AG04450 (cell line): ENCODE measurements at regions of chr17 and their contacts with region 1.

Region 1: GRCh38 chr17:47686276-47686635 is 7.7 kb upstream of the TBKBP1 start:
- DNase-seq: no peak
- H3K4me3 ChIP-seq: no peak overlapping the region
- H3K27ac ChIP-seq: peak overlapping the region; percentile 39
- H3K27me3 ChIP-seq: no peaks in the 10 kb centered on the region
- CTCF ChIP-seq: no peak

Region 2: GRCh38 chr17:47649153-47649971 is 36.9 kb before region 1 on chr17 and contains the start of gene KPNB1:
- CTCF ChIA-PET with region 1: no interaction called
- POLR2A ChIA-PET with region 1: interaction called, 11 read pairs
- DNase-seq: peak; percentile 100
- H3K4me3 ChIP-seq: peak within 1 kb of the TSS; percentile 90
- H3K27ac ChIP-seq: peak within 1 kb of the TSS; percentile 92
- H3K27me3 ChIP-seq: no peaks in the 10 kb centered on the region
- CTCF ChIP-seq: no peak
- polyA plus RNA-seq, gene KPNB1: 207 and 212 TPM in 2 replicates

Region 3: DNA sequence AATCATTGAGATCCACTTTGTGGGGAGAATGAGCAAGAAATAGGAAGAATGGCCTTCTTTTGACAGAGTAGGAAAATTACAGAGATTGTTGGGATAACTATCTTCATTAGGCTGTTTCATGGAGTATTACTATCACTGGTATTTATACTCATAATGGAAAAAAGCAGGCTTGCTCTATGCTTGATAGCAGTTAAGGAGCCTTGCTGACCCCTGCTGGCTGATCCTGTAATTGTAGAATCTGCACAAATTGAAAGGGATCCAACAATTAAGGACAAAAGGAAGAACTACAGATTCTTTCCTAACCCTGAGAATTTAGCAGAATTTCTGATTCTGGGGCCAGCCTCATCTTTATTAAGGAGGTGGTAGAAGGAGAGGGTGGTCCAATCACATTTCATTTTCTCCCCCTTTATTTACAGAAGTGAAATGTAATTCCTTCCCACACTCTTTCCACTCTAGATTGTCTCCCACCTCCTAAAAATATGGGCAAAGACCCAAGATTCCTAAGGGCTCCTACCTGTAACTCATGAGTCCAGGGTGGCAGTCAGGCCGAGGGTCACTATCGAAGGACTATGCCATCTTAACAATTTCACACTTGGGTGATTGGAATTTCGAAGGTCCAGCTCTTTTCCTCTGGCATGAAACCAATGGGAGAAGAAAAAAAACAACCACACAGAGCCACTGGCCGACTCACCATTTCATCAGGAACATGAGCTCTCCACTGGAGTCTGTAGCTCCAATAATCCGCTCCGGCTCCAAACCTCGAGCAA is 388.2 kb after region 1 on chr17:
- CTCF ChIA-PET with region 1: no interaction called
- POLR2A ChIA-PET with region 1: no interaction called
- DNase-seq: no peak
- H3K4me3 ChIP-seq: no peak overlapping the region
- H3K27ac ChIP-seq: no peak overlapping the region
- H3K27me3 ChIP-seq: no peaks in the 10 kb centered on the region
- CTCF ChIP-seq: peak; percentile 85